ENCODE measurements at regions of chr17 and their contacts with region 1.

Region 1: GRCh38 chr17:4215882-4216570 is 47.8 kb downstream of the ANKFY1 start:
- DNase-seq: no peak
- ATAC-seq: no peak
- H3K4me3 ChIP-seq: no peak overlapping the region
- H3K4me3 Mint-ChIP-seq: no peak overlapping the region
- H3K27ac ChIP-seq: no peak overlapping the region
- H3K27ac Mint-ChIP-seq: peak overlapping the region; percentile 4
- H3K4me1 ChIP-seq: peaks cover 8% of the 10 kb centered on the region
- H3K4me1 Mint-ChIP-seq: peaks cover 7% of the 10 kb centered on the region
- H3K27me3 ChIP-seq: no peaks in the 10 kb centered on the region
- H3K27me3 Mint-ChIP-seq: no peaks in the 10 kb centered on the region
- CTCF ChIP-seq: no peak

Region 2: GRCh38 chr17:4167786-4168185 is 48.2 kb before region 1 on chr17:
- CTCF ChIA-PET with region 1: no interaction called
- POLR2A ChIA-PET with region 1: no interaction called
- intact Hi-C with region 1: no loop called
- DNase-seq: peak in 8 of 14 experiments; percentile 18 to 72 (median 42)
- ATAC-seq: peak; percentile 82
- H3K4me3 ChIP-seq: no peak overlapping the region
- H3K4me3 Mint-ChIP-seq: peak overlapping the region; percentile 25
- H3K27ac ChIP-seq: no peak overlapping the region
- H3K27ac Mint-ChIP-seq: peak overlapping the region; percentile 88
- H3K4me1 ChIP-seq: peaks cover 8% of the 10 kb centered on the region
- H3K4me1 Mint-ChIP-seq: peaks cover 14% of the 10 kb centered on the region
- H3K27me3 ChIP-seq: no peaks in the 10 kb centered on the region
- H3K27me3 Mint-ChIP-seq: no peaks in the 10 kb centered on the region
- CTCF ChIP-seq: no peak

Region 3: DNA sequence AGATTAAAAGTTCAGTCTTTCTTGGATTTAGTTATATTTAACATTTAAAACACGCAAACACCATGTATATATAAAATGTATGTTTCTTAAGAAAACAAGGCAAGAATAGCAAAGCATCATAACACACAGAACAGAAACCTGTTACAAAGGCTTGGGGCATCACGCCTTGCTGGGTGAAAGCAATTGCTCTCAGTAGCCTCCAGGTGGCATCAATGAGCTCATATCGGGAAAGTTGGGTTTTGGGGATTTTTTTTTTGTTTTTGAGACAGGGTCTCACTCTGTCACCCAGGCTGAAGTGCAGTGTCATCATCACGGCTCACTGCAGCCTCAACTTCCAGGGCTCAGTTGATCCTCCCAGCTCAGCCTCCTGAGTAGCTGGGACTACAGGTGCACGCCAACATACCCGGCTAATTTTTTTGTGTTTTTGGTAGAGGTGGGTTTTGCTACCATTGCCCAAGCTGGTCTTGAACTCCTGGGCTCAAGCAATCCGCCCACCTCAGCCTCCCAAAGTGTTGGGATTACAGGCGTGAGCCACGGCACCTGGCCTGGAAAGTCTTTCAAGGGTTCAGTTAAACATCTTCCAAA is 16.1 kb before region 1 on chr17:
- CTCF ChIA-PET with region 1: interaction called, 14 read pairs
- POLR2A ChIA-PET with region 1: no interaction called
- intact Hi-C with region 1: no loop called
- DNase-seq: peak in 6 of 14 experiments; percentile 15 to 74 (median 44)
- ATAC-seq: peak; percentile 86
- H3K4me3 ChIP-seq: no peak overlapping the region
- H3K4me3 Mint-ChIP-seq: no peak overlapping the region
- H3K27ac ChIP-seq: no peak overlapping the region
- H3K27ac Mint-ChIP-seq: no peak overlapping the region
- H3K4me1 ChIP-seq: no peaks in the 10 kb centered on the region
- H3K4me1 Mint-ChIP-seq: peaks cover 4% of the 10 kb centered on the region
- H3K27me3 ChIP-seq: no peaks in the 10 kb centered on the region
- H3K27me3 Mint-ChIP-seq: no peaks in the 10 kb centered on the region
- CTCF ChIP-seq: peak; percentile 81

Region 4: DNA sequence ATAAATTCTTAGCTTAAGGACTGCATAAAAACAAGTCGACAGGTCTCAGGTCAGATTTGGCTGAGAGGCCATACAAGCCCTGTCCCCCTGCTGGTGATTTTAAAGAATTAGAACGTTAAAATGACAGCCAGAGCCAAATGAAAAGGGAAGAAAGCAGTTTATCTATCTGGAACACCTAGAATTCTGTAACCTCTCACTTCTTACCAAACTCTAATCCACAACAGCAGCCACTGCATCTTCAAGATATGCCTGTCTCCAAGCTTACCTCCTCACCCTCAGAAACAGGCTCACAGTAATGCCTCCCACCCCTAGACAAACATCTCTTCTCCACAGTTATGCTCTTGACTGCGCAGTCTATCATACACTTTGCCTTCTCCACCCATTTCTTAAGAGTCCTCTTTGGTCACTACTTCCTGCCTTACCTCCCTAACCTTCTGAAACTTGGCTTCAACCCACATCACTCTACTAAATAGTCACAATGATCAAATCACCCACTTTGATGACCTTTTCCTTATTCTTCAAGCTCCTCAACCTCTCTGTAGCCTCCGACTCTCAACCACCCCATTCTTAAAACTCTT is 33.5 kb after region 1 on chr17:
- CTCF ChIA-PET with region 1: interaction called, 13 read pairs
- POLR2A ChIA-PET with region 1: no interaction called
- intact Hi-C with region 1: no loop called
- DNase-seq: peak in 4 of 14 experiments; percentile 18 to 62 (median 42)
- ATAC-seq: no peak
- H3K4me3 ChIP-seq: no peak overlapping the region
- H3K4me3 Mint-ChIP-seq: no peak overlapping the region
- H3K27ac ChIP-seq: no peak overlapping the region
- H3K27ac Mint-ChIP-seq: peak overlapping the region; percentile 6
- H3K4me1 ChIP-seq: peaks cover 10% of the 10 kb centered on the region
- H3K4me1 Mint-ChIP-seq: peaks cover 62% of the 10 kb centered on the region
- H3K27me3 ChIP-seq: no peaks in the 10 kb centered on the region
- H3K27me3 Mint-ChIP-seq: no peaks in the 10 kb centered on the region
- CTCF ChIP-seq: peak; percentile 63

Region 5: GRCh38 chr17:4304417-4305027 is 88.5 kb after region 1 on chr17:
- CTCF ChIA-PET with region 1: interaction called, 10 read pairs
- POLR2A ChIA-PET with region 1: no interaction called
- intact Hi-C with region 1: loop called (anchors 1 to 5 kb)
- DNase-seq: peak in 13 of 14 experiments; percentile 8 to 82 (median 46)
- ATAC-seq: peak; percentile 93
- H3K4me3 ChIP-seq: no peak overlapping the region
- H3K4me3 Mint-ChIP-seq: no peak overlapping the region
- H3K27ac ChIP-seq: no peak overlapping the region
- H3K27ac Mint-ChIP-seq: peak overlapping the region; percentile 45
- H3K4me1 ChIP-seq: peaks cover 7% of the 10 kb centered on the region
- H3K4me1 Mint-ChIP-seq: peaks cover 34% of the 10 kb centered on the region
- H3K27me3 ChIP-seq: no peaks in the 10 kb centered on the region
- H3K27me3 Mint-ChIP-seq: no peaks in the 10 kb centered on the region
- CTCF ChIP-seq: peak; percentile 95

Region 6: DNA sequence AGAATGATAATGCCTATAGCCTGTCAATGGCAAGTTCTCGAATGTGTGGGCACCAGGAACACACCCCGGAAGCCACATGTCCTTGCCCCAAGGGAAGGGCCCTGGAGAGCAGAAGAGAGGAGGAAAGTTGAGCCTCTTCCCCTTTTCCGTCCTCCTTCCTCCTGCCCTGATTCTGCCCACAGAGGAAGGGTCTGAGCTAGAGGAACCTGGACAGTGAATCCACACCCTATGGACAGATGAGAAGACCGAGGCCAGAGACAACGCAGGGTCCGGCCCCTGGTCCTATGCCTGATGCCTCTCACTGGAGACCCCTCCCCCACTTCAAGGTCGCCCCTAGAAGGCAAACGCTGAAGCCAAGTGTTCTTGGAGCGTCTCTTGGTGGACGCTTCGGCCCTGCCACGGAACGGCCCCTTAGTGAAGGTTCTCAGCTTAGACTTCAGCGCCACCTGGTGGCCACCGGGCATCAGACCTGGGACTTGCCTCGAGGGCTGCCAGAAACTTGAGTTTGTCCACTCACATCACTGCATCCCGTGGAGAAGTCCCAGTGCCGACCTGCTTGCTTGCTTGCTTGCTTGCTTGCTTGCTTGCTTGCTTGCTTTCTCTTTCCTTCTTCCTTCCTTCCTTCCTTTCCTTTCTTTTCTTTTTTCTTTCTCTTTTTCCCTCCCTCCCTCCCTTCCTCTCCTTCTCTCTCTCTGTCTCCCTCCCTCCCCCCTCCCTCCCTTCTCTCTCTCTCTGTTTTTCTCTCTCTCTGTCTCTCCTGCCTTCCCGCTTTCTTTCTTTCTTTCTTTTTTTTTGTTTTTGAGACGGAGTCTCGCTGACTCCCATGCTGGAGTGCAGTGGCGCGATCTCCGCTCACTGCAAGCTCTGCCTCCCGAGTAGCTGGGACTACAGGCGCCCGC is 197.2 kb after region 1 on chr17:
- CTCF ChIA-PET with region 1: interaction called, 37 read pairs
- POLR2A ChIA-PET with region 1: interaction called, 3 read pairs
- intact Hi-C with region 1: loop called (anchors 1 kb)
- DNase-seq: peak; percentile 82 to 96 (median 92)
- ATAC-seq: peak; percentile 95
- H3K4me3 ChIP-seq: peak overlapping the region; percentile 36
- H3K4me3 Mint-ChIP-seq: peak overlapping the region; percentile 71
- H3K27ac ChIP-seq: no peak overlapping the region
- H3K27ac Mint-ChIP-seq: no peak overlapping the region
- H3K4me1 ChIP-seq: peaks cover 7% of the 10 kb centered on the region
- H3K4me1 Mint-ChIP-seq: peaks cover 5% of the 10 kb centered on the region
- H3K27me3 ChIP-seq: no peaks in the 10 kb centered on the region
- H3K27me3 Mint-ChIP-seq: no peaks in the 10 kb centered on the region
- CTCF ChIP-seq: peak; percentile 73

Region 7: GRCh38 chr17:4625181-4625617 is 409.2 kb after region 1 on chr17:
- CTCF ChIA-PET with region 1: no interaction called
- POLR2A ChIA-PET with region 1: no interaction called
- intact Hi-C with region 1: loop called in 1 of 2 experiments (anchors 1 kb)
- DNase-seq: no peak
- ATAC-seq: no peak
- H3K4me3 ChIP-seq: no peak overlapping the region
- H3K4me3 Mint-ChIP-seq: no peak overlapping the region
- H3K27ac ChIP-seq: no peak overlapping the region
- H3K27ac Mint-ChIP-seq: no peak overlapping the region
- H3K4me1 ChIP-seq: peaks cover 3% of the 10 kb centered on the region
- H3K4me1 Mint-ChIP-seq: no peaks in the 10 kb centered on the region
- H3K27me3 ChIP-seq: no peaks in the 10 kb centered on the region
- H3K27me3 Mint-ChIP-seq: peaks cover 16% of the 10 kb centered on the region
- CTCF ChIP-seq: no peak

Measured in CD4-positive, alpha-beta T cell (primary cell).